ENCODE measurements at regions of chr13 and their contacts with region 1.

Region 1: DNA sequence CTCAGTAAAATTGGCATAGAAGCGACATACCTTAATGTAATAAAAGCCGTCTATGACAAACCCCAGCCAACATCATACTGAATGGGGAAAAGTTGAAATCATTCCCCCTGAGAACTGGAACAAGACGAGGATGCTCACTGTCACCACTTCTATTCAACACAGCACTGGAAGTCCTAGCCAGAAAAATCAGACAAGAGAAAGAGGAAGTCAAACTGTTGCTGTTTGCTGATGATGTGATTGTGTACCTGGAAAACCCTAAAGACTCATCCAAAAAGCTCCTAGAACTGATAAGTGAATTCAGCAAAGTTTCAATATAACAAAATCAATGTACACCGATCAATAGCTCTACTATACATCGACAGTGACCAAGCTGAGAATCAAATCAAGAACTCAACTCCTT is 63.3 kb downstream of the TNFSF13B start:
- DNase-seq: no peak
- H3K4me3 ChIP-seq: no peak overlapping the region
- H3K27ac ChIP-seq: no peak overlapping the region
- H3K4me1 ChIP-seq: no peaks in the 10 kb centered on the region
- H3K27me3 ChIP-seq: no peaks in the 10 kb centered on the region
- CTCF ChIP-seq: no peak
- EP300 ChIP-seq: no peak
- POLR2A ChIP-seq: no peak

Region 2: GRCh38 chr13:108269601-108270328 is 63.0 kb before region 1 on chr13 and contains the start of gene TNFSF13B:
- in situ Hi-C with region 1: no loop called
- intact Hi-C with region 1: no loop called
- DNase-seq: peak; percentile 57
- H3K4me3 ChIP-seq: peak within 1 kb of the TSS; percentile 19 to 50 (median 24)
- H3K27ac ChIP-seq: peak within 1 kb of the TSS; percentile 45 to 67 (median 58)
- H3K4me1 ChIP-seq: peaks cover 0 to 11% (median 2%) of the 10 kb centered on the region in 4 donors
- H3K27me3 ChIP-seq: no peaks in the 10 kb centered on the region
- CTCF ChIP-seq: no peak
- EP300 ChIP-seq: no peak
- POLR2A ChIP-seq: no peak
- total RNA-seq, gene TNFSF13B: 1.1 to 7.1 TPM in 2 of 4 donors, not detected in the others

Region 3: DNA sequence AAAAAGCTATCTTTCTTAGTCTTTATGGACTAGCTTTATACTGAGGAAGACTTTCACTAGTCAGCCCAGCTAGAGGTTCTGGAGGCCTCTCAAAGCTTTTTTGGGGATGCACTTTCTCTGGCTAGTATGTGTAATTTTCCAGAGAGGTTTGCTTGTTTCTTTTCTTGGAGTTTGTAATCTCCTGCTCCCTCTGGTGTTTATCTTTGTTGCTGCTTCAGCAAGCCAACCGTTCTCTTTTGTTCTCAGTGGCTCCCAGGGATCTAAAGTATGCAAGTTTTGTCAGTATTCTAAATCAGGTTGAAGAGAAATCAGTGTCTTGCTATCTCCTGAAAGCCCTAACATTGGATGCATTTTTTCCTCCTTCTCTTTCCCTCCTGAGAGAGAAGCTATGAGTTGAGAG is 175.5 kb after region 1 on chr13:
- in situ Hi-C with region 1: loop called in 3 of 4 experiments (anchors 10 kb)
- intact Hi-C with region 1: no loop called
- DNase-seq: no peak
- H3K4me3 ChIP-seq: no peak overlapping the region
- H3K27ac ChIP-seq: no peak overlapping the region
- H3K4me1 ChIP-seq: no peaks in the 10 kb centered on the region
- H3K27me3 ChIP-seq: no peaks in the 10 kb centered on the region
- CTCF ChIP-seq: peak in 3 of 5 experiments; percentile 9 to 21 (median 15)
- EP300 ChIP-seq: no peak
- POLR2A ChIP-seq: no peak

Region 4: GRCh38 chr13:108787700-108788414 is 455.1 kb after region 1 on chr13:
- in situ Hi-C with region 1: no loop called
- intact Hi-C with region 1: no loop called
- DNase-seq: no peak
- H3K4me3 ChIP-seq: no peak overlapping the region
- H3K27ac ChIP-seq: no peak overlapping the region
- H3K4me1 ChIP-seq: no peaks in the 10 kb centered on the region
- H3K27me3 ChIP-seq: no peaks in the 10 kb centered on the region
- CTCF ChIP-seq: no peak
- EP300 ChIP-seq: no peak
- POLR2A ChIP-seq: no peak

Measured in transverse colon (tissue), 4 donors.